HepG2 (cell line): ENCODE measurements at regions of chr20 and their contacts with region 1.

Region 1: DNA sequence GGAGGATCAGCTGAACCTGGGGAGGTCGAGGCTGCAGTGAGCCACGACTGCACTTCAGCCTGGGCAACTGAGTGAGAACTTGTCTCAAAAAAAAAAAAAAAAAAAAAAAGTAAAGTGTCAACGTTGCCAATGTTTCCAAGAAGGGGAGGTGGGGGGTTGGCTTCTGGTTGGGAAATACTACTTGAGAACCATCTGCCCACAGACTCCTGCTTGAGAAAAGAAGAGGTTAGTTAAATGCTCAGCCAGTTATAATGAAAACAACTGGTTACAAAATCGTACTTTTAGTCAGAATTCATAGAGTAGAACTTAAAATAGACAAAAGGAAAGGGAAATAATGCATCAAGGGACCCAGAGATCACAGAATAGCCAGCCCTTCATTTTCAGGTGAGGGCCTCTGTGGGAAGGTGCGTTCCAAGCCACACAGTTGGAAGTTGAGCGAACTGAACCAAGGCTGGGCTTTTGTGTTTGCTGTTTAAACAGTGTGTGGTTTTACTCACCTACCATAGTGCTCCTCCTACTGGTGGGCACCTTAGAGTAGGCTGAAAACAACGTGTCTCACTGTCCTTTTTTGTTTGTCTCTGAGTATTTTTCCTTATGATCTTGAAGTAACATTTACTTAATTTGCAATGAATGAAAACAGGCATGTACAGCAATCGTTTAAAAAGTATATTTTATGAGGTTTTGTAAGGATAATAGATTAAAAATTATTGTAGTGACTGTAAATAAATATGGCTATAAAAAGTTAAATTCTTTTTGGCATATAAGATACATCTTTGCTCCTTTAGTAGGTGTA is 200.7 kb downstream of the BCAS1 start:
- DNase-seq: peak; percentile 96
- ATAC-seq: peak; percentile 92
- H3K4me3 ChIP-seq: peak overlapping the region in 2 of 3 experiments; percentile 8; a peak in 2 of 6 replicates
- H3K27ac ChIP-seq: peak overlapping the region; percentile 37
- H3K4me1 ChIP-seq: peaks cover 77% of the 10 kb centered on the region
- H3K27me3 ChIP-seq: no peaks in the 10 kb centered on the region
- CTCF ChIP-seq: peak; percentile 99
- EP300 ChIP-seq: peak in 1 of 2 experiments; percentile 79; a peak in 3 of 4 replicates
- POLR2A ChIP-seq: no peak
- RAD21 ChIP-seq: peak; percentile 97

Region 2: DNA sequence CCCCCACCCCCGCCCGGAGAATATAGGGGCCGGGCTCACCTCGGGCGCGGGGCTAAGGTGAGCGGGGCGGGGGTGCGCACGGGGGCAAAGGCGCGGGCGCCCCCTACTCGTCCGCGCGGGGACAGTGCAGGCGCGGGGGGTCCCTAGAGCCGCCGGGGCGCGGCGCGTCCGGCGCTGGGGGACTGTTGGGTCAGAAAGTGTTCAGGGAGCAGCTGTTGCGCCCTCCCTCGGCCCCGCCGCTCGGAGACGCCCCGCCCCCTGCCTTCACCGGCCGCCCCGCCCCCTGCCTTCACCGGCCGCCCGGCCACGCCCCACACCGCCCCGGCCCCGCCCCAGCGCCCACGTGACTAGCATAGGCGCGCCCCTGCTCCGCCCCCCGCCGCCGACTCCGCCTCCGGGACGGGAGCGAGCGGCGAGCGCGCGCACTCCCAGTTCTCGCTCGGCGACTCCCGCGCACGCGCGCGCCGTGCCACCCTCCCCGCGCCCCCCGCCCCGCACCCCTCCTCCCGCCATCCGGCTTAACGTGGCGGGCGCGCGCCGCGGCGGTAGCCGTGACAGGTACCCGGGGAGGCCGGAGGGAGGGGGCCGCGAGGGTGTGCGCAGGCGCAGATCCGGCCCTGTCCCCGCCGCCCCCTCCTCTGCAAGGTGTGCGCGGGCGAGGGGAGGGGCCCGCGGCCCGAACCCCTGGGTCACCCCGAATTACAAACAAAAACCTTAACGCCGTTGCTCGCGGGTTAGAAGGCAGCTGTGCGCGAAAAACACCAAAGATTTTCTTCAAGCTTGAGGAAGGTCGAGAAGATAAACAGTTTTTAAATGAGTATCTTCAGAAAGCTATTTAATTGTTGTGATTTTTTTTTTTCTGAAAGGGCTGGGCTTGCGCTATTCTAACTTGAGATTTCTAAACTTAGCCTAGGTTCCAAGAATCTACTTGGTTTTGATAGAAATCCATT is 275.3 kb before region 1 on chr20:
- CTCF ChIA-PET with region 1: no interaction called
- POLR2A ChIA-PET with region 1: interaction called, 14 read pairs
- in situ Hi-C with region 1: no loop called
- intact Hi-C with region 1: loop called (anchors 1 kb)
- DNase-seq: peak; percentile 89
- ATAC-seq: peak; percentile 88
- H3K4me3 ChIP-seq: peak overlapping the region; percentile 89 to 98 (median 90)
- H3K27ac ChIP-seq: peak overlapping the region; percentile 87
- H3K4me1 ChIP-seq: peaks cover 43% of the 10 kb centered on the region
- H3K27me3 ChIP-seq: no peaks in the 10 kb centered on the region; a peak in 1 of 5 replicates
- CTCF ChIP-seq: peak; percentile 88
- EP300 ChIP-seq: peak in 1 of 2 experiments; percentile 14; a peak in 1 of 4 replicates
- POLR2A ChIP-seq: peak; percentile 52 to 60
- RAD21 ChIP-seq: peak; percentile 91

Region 3: GRCh38 chr20:53677447-53678314 is 192.0 kb before region 1 on chr20:
- CTCF ChIA-PET with region 1: interaction called, 4 read pairs
- POLR2A ChIA-PET with region 1: interaction called, 3 read pairs
- in situ Hi-C with region 1: no loop called
- intact Hi-C with region 1: loop called (anchors 2 kb)
- DNase-seq: peak; percentile 92
- ATAC-seq: peak; percentile 97
- H3K4me3 ChIP-seq: peak overlapping the region; percentile 45 to 70 (median 67)
- H3K27ac ChIP-seq: peak overlapping the region; percentile 90
- H3K4me1 ChIP-seq: peaks cover 62% of the 10 kb centered on the region
- H3K27me3 ChIP-seq: no peaks in the 10 kb centered on the region
- CTCF ChIP-seq: peak; percentile 77
- EP300 ChIP-seq: peak; percentile 7 to 80; a peak in 3 of 4 replicates
- POLR2A ChIP-seq: peak in 1 of 2 experiments; percentile 47; a peak in 2 of 4 replicates
- RAD21 ChIP-seq: peak; percentile 91

Region 4: DNA sequence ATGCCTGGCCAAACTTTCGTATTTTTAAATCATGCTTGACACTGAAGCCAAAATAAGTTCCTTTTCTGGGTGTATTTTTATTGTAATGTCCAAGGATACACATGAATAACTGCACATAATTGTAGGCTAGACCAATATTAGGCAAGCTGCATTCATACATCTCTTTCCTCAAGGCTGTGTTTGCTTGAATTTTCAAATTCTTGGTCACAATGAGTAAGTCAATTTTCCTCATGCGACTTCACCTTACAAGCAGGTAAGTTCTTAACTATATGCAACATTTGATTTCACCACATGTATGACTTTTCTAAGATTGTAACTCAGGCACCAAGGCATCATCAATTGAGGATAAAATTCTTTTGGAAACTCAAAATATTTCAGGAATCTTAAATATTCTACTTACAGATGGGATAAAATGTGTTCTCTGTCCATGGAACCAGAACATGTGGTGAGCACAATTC is 163.6 kb before region 1 on chr20:
- CTCF ChIA-PET with region 1: no interaction called
- POLR2A ChIA-PET with region 1: no interaction called
- in situ Hi-C with region 1: no loop called
- intact Hi-C with region 1: no loop called
- DNase-seq: no peak
- ATAC-seq: no peak
- H3K4me3 ChIP-seq: no peak overlapping the region
- H3K27ac ChIP-seq: no peak overlapping the region
- H3K4me1 ChIP-seq: peaks cover 36% of the 10 kb centered on the region
- H3K27me3 ChIP-seq: no peaks in the 10 kb centered on the region
- CTCF ChIP-seq: no peak
- EP300 ChIP-seq: no peak
- POLR2A ChIP-seq: no peak
- RAD21 ChIP-seq: no peak

Region 5: GRCh38 chr20:53773792-53774401 is 95.8 kb before region 1 on chr20:
- CTCF ChIA-PET with region 1: no interaction called
- POLR2A ChIA-PET with region 1: interaction called, 11 read pairs
- in situ Hi-C with region 1: no loop called
- intact Hi-C with region 1: no loop called
- DNase-seq: peak; percentile 66
- ATAC-seq: peak; percentile 51
- H3K4me3 ChIP-seq: no peak overlapping the region
- H3K27ac ChIP-seq: peak overlapping the region; percentile 56
- H3K4me1 ChIP-seq: peaks cover 76% of the 10 kb centered on the region
- H3K27me3 ChIP-seq: no peaks in the 10 kb centered on the region
- CTCF ChIP-seq: no peak
- EP300 ChIP-seq: no peak
- POLR2A ChIP-seq: no peak
- RAD21 ChIP-seq: no peak

Region 6: GRCh38 chr20:53800808-53801604 is 68.7 kb before region 1 on chr20:
- CTCF ChIA-PET with region 1: no interaction called
- POLR2A ChIA-PET with region 1: interaction called, 50 read pairs
- in situ Hi-C with region 1: no loop called
- intact Hi-C with region 1: loop called (anchors 2 kb)
- DNase-seq: peak; percentile 100
- ATAC-seq: peak; percentile 95
- H3K4me3 ChIP-seq: peak overlapping the region; percentile 28 to 48 (median 44); a peak in 4 of 6 replicates
- H3K27ac ChIP-seq: peak overlapping the region; percentile 86
- H3K4me1 ChIP-seq: peaks cover 92% of the 10 kb centered on the region
- H3K27me3 ChIP-seq: no peaks in the 10 kb centered on the region
- CTCF ChIP-seq: 0 out of 2 replicates have a peak, but pooled peaks have one; percentile 20
- EP300 ChIP-seq: peak; percentile 95 to 99; a peak in 3 of 4 replicates
- POLR2A ChIP-seq: 0 out of 4 replicates have a peak, but pooled peaks have one; percentile 23 to 36
- RAD21 ChIP-seq: peak; percentile 56

Region 7: GRCh38 chr20:53915446-53916172 is 45.9 kb after region 1 on chr20:
- CTCF ChIA-PET with region 1: interaction called, 10 read pairs
- POLR2A ChIA-PET with region 1: interaction called, 18 read pairs
- in situ Hi-C with region 1: no loop called
- intact Hi-C with region 1: loop called (anchors 5 kb)
- DNase-seq: peak; percentile 84
- ATAC-seq: peak; percentile 92
- H3K4me3 ChIP-seq: peak overlapping the region; percentile 73 to 88 (median 80)
- H3K27ac ChIP-seq: peak overlapping the region; percentile 17
- H3K4me1 ChIP-seq: peaks cover 48% of the 10 kb centered on the region
- H3K27me3 ChIP-seq: peaks cover 0 to 2% of the 10 kb centered on the region in 2 experiments; a peak in 1 of 5 replicates
- CTCF ChIP-seq: peak; percentile 96
- EP300 ChIP-seq: no peak; a peak in 1 of 4 replicates
- POLR2A ChIP-seq: no peak
- RAD21 ChIP-seq: peak; percentile 83

Region 8: DNA sequence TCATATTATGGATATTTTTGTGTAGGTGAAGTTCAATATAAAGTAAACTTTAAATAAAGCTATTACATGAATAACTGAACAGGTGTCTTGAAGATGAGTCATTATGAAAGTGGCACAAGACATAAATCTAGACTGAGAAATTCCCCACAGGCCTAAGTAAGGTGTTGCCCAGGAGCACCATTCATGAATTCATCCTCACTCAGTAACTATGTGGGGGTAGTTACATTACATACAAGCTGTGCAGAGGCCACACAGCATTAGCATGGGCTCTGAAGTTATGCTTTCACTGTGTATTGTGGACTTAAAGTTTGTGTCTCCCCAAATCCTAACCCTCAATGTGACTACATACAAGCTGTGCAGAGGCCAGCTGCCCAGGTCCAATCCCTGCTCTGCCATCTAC is 134.8 kb after region 1 on chr20:
- CTCF ChIA-PET with region 1: no interaction called
- POLR2A ChIA-PET with region 1: no interaction called
- in situ Hi-C with region 1: no loop called
- intact Hi-C with region 1: no loop called
- DNase-seq: no peak
- ATAC-seq: no peak
- H3K4me3 ChIP-seq: no peak overlapping the region
- H3K27ac ChIP-seq: no peak overlapping the region
- H3K4me1 ChIP-seq: no peaks in the 10 kb centered on the region
- H3K27me3 ChIP-seq: no peaks in the 10 kb centered on the region
- CTCF ChIP-seq: no peak
- EP300 ChIP-seq: no peak
- POLR2A ChIP-seq: no peak
- RAD21 ChIP-seq: no peak

Region 9: GRCh38 chr20:54984104-54984448 is 1114.4 kb after region 1 on chr20:
- CTCF ChIA-PET with region 1: no interaction called
- POLR2A ChIA-PET with region 1: no interaction called
- in situ Hi-C with region 1: no loop called
- intact Hi-C with region 1: no loop called
- DNase-seq: no peak
- ATAC-seq: no peak
- H3K4me3 ChIP-seq: no peak overlapping the region
- H3K27ac ChIP-seq: no peak overlapping the region
- H3K4me1 ChIP-seq: no peaks in the 10 kb centered on the region
- H3K27me3 ChIP-seq: no peaks in the 10 kb centered on the region
- CTCF ChIP-seq: no peak
- EP300 ChIP-seq: no peak
- POLR2A ChIP-seq: no peak
- RAD21 ChIP-seq: no peak